CD4-positive, alpha-beta memory T cell (primary cell): ENCODE measurements at regions of chr9 and their contacts with region 1.

Region 1: GRCh38 chr9:131478421-131478868 is 24.3 kb upstream of the POMT1 start:
- DNase-seq: peak in 4 of 5 donors; percentile 39 to 55 (median 48)
- H3K4me3 ChIP-seq: no peak overlapping the region
- H3K4me3 Mint-ChIP-seq: peak overlapping the region in 1 of 8 donors; percentile 23
- H3K27ac ChIP-seq: no peak overlapping the region
- H3K27ac Mint-ChIP-seq: peak overlapping the region in 4 of 7 donors; percentile 17 to 80 (median 66)
- H3K4me1 ChIP-seq: no peaks in the 10 kb centered on the region
- H3K4me1 Mint-ChIP-seq: peaks cover 0 to 5% (median under 1%) of the 10 kb centered on the region in 4 donors
- H3K27me3 ChIP-seq: no peaks in the 10 kb centered on the region
- H3K27me3 Mint-ChIP-seq: no peaks in the 10 kb centered on the region

Region 2: GRCh38 chr9:131349881-131350563 is 128.4 kb before region 1 on chr9:
- CTCF ChIA-PET with region 1: interaction called, 75 read pairs
- POLR2A ChIA-PET with region 1: interaction called, 5 read pairs
- intact Hi-C with region 1: loop called (anchors 1 kb)
- DNase-seq: peak; percentile 79 to 82 (median 81)
- H3K4me3 ChIP-seq: no peak overlapping the region
- H3K4me3 Mint-ChIP-seq: peak overlapping the region in 4 of 8 donors; percentile 36 to 63 (median 50)
- H3K27ac ChIP-seq: no peak overlapping the region
- H3K27ac Mint-ChIP-seq: peak overlapping the region in 3 of 7 donors; percentile 30 to 91 (median 42)
- H3K4me1 ChIP-seq: peaks cover 9% of the 10 kb centered on the region
- H3K4me1 Mint-ChIP-seq: peaks cover 0 to 12% (median 6%) of the 10 kb centered on the region in 4 donors
- H3K27me3 ChIP-seq: no peaks in the 10 kb centered on the region
- H3K27me3 Mint-ChIP-seq: peaks cover 0 to 4% of the 10 kb centered on the region in 2 donors

Region 3: DNA sequence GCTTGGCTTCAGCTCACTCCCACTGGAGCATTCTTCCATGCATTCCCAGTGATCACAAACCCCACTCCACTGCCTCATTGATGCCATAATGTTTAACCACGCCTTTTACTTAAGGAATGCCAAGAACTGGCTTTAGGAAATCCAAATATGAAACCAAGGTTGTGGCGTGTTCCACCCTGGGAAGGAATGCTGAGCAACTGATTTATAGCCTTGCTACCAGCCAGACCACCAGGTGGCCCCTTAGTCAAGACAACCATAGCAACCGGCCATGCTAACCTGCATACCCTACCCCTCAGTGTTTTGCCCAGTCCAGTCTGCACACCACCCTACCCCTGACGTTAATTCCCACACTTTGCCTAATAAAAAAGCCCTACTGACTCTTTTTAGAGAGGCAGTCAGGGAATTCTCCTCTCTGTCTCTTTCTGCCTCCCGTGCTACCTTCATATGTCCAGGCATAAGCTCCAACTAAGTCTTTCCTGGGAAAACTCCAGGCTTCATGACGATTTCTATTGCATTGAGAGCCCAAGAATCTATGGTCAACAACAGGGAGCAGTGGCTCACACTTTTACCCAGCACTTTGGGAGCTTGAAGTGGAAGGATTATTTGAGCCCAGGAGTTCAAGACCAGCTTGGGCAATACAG is 111.6 kb before region 1 on chr9:
- CTCF ChIA-PET with region 1: interaction called, 7 read pairs
- POLR2A ChIA-PET with region 1: no interaction called
- intact Hi-C with region 1: loop called (anchors 5 kb)
- DNase-seq: no peak
- H3K4me3 ChIP-seq: no peak overlapping the region
- H3K4me3 Mint-ChIP-seq: no peak overlapping the region
- H3K27ac ChIP-seq: no peak overlapping the region
- H3K27ac Mint-ChIP-seq: no peak overlapping the region
- H3K4me1 ChIP-seq: peaks cover 1% of the 10 kb centered on the region
- H3K4me1 Mint-ChIP-seq: peaks cover 2 to 5% (median 3%) of the 10 kb centered on the region in 4 donors
- H3K27me3 ChIP-seq: no peaks in the 10 kb centered on the region
- H3K27me3 Mint-ChIP-seq: no peaks in the 10 kb centered on the region

Region 4: DNA sequence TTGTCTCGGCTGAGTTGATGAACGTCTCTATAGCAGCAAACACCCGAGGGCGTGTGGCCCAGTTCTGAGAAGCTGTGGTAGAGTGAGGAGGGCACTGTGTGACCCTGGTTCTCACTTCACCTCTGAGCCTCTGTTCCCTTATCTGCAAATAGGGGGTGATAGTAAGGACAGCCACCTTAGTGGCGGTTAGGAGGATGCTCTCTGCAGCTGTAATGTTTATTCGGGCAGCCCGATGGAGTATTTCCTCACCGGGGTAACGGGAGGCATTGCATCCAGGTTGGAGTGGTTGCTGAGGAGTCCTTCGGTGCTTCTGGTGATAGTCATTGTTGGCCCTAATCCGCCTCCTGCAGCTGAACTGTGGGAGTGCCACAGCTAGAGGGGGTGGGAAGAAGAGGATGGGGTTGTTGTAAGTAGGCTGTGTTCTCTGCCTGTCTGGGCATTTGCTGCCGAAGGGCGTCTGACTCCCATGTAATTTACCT is 70.7 kb before region 1 on chr9:
- CTCF ChIA-PET with region 1: interaction called, 8 read pairs
- POLR2A ChIA-PET with region 1: interaction called, 3 read pairs
- intact Hi-C with region 1: loop called (anchors 5 kb)
- DNase-seq: peak; percentile 54 to 68 (median 59)
- H3K4me3 ChIP-seq: peak overlapping the region in 1 of 2 donors; percentile 6
- H3K4me3 Mint-ChIP-seq: peak overlapping the region; percentile 72 to 89 (median 82)
- H3K27ac ChIP-seq: peak overlapping the region; percentile 46
- H3K27ac Mint-ChIP-seq: peak overlapping the region; percentile 62 to 92 (median 88)
- H3K4me1 ChIP-seq: peaks cover 95% of the 10 kb centered on the region
- H3K4me1 Mint-ChIP-seq: peaks cover 70 to 92% (median 80%) of the 10 kb centered on the region in 4 donors
- H3K27me3 ChIP-seq: no peaks in the 10 kb centered on the region
- H3K27me3 Mint-ChIP-seq: no peaks in the 10 kb centered on the region

Region 5: DNA sequence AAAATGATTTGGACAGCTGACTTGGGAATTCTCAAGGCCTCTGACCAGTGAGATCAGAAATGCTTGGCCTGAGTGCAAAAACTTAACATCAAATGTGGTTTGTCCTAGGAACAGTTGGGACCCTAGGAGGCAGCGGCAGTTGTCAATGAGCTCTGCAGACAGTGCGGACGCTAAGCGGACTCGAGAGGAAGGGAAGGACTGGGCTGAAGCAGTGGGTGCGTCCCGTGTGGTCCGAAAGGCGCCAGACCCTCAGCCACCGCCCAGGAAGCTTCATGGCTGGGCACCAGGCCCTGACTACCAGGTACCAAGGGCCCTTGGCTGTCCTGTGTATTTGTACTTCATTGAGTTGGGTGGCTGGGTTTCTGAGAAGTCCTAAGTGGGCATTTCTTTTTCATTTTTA is 19.4 kb before region 1 on chr9:
- CTCF ChIA-PET with region 1: interaction called, 10 read pairs
- POLR2A ChIA-PET with region 1: no interaction called
- intact Hi-C with region 1: no loop called
- DNase-seq: no peak
- H3K4me3 ChIP-seq: no peak overlapping the region
- H3K4me3 Mint-ChIP-seq: no peak overlapping the region
- H3K27ac ChIP-seq: no peak overlapping the region
- H3K27ac Mint-ChIP-seq: peak overlapping the region in 4 of 7 donors; percentile 43 to 75 (median 56)
- H3K4me1 ChIP-seq: no peaks in the 10 kb centered on the region
- H3K4me1 Mint-ChIP-seq: peaks cover 3 to 19% (median 15%) of the 10 kb centered on the region in 4 donors
- H3K27me3 ChIP-seq: no peaks in the 10 kb centered on the region
- H3K27me3 Mint-ChIP-seq: no peaks in the 10 kb centered on the region

Region 6: GRCh38 chr9:131517761-131518190 is 39.3 kb after region 1 on chr9:
- CTCF ChIA-PET with region 1: no interaction called
- POLR2A ChIA-PET with region 1: no interaction called
- intact Hi-C with region 1: no loop called
- DNase-seq: no peak
- H3K4me3 ChIP-seq: no peak overlapping the region
- H3K4me3 Mint-ChIP-seq: no peak overlapping the region
- H3K27ac ChIP-seq: no peak overlapping the region
- H3K27ac Mint-ChIP-seq: peak overlapping the region in 2 of 7 donors; percentile 29 to 70
- H3K4me1 ChIP-seq: no peaks in the 10 kb centered on the region
- H3K4me1 Mint-ChIP-seq: peaks cover 0 to 1% (median 0%) of the 10 kb centered on the region in 4 donors
- H3K27me3 ChIP-seq: no peaks in the 10 kb centered on the region
- H3K27me3 Mint-ChIP-seq: no peaks in the 10 kb centered on the region